PC-3 (cell line): ENCODE measurements at regions of chr7 and their contacts with region 1.

Region 1: GRCh38 chr7:29113384-29114103 is 32.8 kb downstream of the CPVL start:
- DNase-seq: peak; percentile 89
- ATAC-seq: peak; percentile 90
- H3K4me3 ChIP-seq: peak overlapping the region; percentile 1; the same call in 1 of the 2 replicates
- H3K27ac ChIP-seq: peak overlapping the region; percentile 76
- H3K4me1 ChIP-seq: peaks cover 51% of the 10 kb centered on the region
- H3K27me3 ChIP-seq: no peaks in the 10 kb centered on the region
- CTCF ChIP-seq: peak; percentile 74

Region 2: GRCh38 chr7:28853834-28854749 is 259.5 kb before region 1 on chr7:
- CTCF ChIA-PET with region 1: no interaction called
- POLR2A ChIA-PET with region 1: no interaction called
- intact Hi-C with region 1: no loop called
- DNase-seq: peak; percentile 87
- ATAC-seq: peak; percentile 70
- H3K4me3 ChIP-seq: peak overlapping the region; percentile 75
- H3K27ac ChIP-seq: no peak overlapping the region
- H3K4me1 ChIP-seq: peaks cover 47% of the 10 kb centered on the region
- H3K27me3 ChIP-seq: no peaks in the 10 kb centered on the region
- CTCF ChIP-seq: peak; percentile 83

Region 3: DNA sequence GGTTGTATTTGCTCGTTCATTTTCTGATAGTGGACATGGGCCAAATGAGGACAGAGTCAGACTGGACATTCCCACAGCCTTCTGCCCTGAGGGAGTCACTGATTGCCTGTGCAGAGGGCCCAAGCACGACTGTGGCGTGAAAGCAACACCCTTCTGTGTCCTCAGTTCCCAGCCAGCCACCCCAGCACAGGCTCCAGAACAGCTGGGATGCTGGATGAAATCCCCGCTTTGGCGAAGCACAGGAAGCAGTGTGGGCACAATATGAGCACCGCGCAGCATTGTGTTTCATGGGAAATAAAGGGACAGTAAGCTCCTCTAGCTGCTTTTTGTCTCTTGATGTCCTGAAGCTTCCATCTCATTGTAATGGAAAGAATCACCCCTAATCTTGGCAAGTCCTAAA is 175.9 kb before region 1 on chr7:
- CTCF ChIA-PET with region 1: no interaction called
- POLR2A ChIA-PET with region 1: no interaction called
- intact Hi-C with region 1: no loop called
- DNase-seq: no peak
- ATAC-seq: no peak
- H3K4me3 ChIP-seq: no peak overlapping the region
- H3K27ac ChIP-seq: no peak overlapping the region
- H3K4me1 ChIP-seq: no peaks in the 10 kb centered on the region
- H3K27me3 ChIP-seq: no peaks in the 10 kb centered on the region
- CTCF ChIP-seq: no peak

Region 4: GRCh38 chr7:29146057-29146706 is 32.6 kb after region 1 on chr7 and contains the start of gene CPVL:
- CTCF ChIA-PET with region 1: interaction called, 4 read pairs
- POLR2A ChIA-PET with region 1: no interaction called
- intact Hi-C with region 1: loop called (anchors 5 kb)
- DNase-seq: peak; percentile 73
- ATAC-seq: peak; percentile 75
- H3K4me3 ChIP-seq: peak within 1 kb of the TSS; percentile 73
- H3K27ac ChIP-seq: peak within 1 kb of the TSS; percentile 13; the same call in 1 of the 2 replicates
- H3K4me1 ChIP-seq: peaks cover 17% of the 10 kb centered on the region
- H3K27me3 ChIP-seq: no peaks in the 10 kb centered on the region
- CTCF ChIP-seq: no peak
- total RNA-seq, gene CPVL: 14.7 and 15.3 TPM in 2 replicates

Region 5: GRCh38 chr7:29345600-29345999 is 232.1 kb after region 1 on chr7:
- CTCF ChIA-PET with region 1: interaction called, 11 read pairs
- POLR2A ChIA-PET with region 1: no interaction called
- intact Hi-C with region 1: loop called (anchors 1 kb)
- DNase-seq: peak; percentile 57
- ATAC-seq: peak; percentile 53
- H3K4me3 ChIP-seq: no peak overlapping the region
- H3K27ac ChIP-seq: no peak overlapping the region
- H3K4me1 ChIP-seq: peaks cover 19% of the 10 kb centered on the region
- H3K27me3 ChIP-seq: no peaks in the 10 kb centered on the region
- CTCF ChIP-seq: peak; percentile 65

Region 6: DNA sequence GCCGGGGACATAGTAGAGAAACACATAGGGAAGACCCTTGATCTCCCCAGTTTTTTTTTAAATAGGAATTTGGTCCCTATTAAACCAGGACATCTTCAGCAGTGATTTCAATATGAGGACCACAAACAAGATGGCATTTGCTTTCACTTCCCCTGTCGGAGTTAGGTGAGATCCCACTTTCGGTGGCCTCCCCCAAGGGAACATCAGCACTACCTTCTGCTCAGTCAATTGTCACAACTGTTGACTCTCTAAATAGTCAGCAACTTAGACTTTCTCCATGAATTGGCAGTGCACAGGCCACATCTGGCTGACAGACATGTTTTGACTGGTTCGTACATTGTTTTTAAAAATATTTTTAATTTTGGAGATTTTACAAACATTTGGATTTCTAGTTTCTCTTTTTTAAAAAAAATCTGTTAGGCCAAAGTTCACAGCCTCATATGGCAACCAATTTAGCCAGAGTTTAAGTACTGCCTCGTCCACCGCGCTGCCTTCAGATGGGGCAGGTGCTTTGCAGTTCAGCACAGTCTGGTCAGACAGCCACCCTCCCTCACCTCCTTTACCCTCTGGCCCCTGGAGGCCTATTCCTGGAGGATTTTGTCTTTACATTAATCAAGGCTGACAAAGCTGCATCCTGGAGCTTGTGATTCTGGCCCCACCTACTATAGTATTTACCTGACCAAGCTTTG is 310.9 kb after region 1 on chr7:
- CTCF ChIA-PET with region 1: no interaction called
- POLR2A ChIA-PET with region 1: no interaction called
- intact Hi-C with region 1: no loop called
- DNase-seq: no peak
- ATAC-seq: no peak
- H3K4me3 ChIP-seq: no peak overlapping the region
- H3K27ac ChIP-seq: no peak overlapping the region
- H3K4me1 ChIP-seq: no peaks in the 10 kb centered on the region
- H3K27me3 ChIP-seq: no peaks in the 10 kb centered on the region
- CTCF ChIP-seq: no peak